H1 (cell line): ENCODE measurements at regions of chr15 and their contacts with region 1.

Region 1: DNA sequence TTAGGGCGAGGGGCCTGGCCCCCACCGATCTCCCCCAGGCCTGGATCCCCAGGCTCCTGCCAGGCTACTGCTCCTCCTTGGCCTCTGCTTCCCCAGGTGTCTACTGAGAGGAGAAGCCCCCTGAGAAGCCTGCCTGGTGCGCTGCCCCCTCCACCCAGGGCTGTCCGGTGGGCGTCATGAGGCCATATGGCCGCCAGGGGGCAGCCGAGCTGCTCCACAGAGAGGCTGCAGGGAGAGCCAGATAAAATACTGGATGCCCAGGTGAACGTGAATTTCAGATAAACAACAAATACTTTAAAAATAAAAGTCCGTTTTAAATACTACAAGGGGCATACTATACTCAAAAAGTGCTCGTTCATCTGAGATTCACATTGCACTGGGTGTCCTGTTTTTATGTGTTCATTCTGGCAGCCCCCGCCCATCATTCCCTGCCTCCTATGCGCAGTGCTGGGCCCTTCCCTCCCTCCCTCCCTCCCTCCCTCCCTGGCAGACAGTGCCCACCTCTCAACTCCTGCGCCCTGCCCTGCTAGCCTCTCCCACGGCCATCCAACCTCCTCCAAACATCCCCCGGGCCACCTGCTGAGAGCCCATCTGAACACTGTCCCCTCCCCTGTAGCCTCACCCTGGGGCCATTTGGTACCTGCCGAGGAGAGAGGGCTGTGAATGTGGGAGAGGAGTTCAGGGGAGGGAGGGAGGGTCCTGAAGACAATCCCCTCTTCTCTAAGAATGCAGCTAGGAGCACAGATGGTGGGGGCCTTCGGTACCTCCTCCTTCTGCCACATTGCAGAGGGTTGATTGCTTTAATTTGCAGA is 29.6 kb downstream of the PSTPIP1 start:
- DNase-seq: peak in 1 of 2 experiments; percentile 96
- H3K4me3 ChIP-seq: peak overlapping the region in 1 of 4 experiments; percentile 34; a peak in 1 of 8 replicates
- H3K27ac ChIP-seq: no peak overlapping the region
- H3K4me1 ChIP-seq: peaks cover 0 to 13% (median 2%) of the 10 kb centered on the region in 4 experiments; a peak in 5 of 7 replicates
- H3K27me3 ChIP-seq: peaks cover 0 to 7% (median 0%) of the 10 kb centered on the region in 4 experiments; a peak in 3 of 7 replicates
- CTCF ChIP-seq: peak in 2 of 3 experiments; percentile 85 to 87; a peak in 3 of 4 replicates
- EP300 ChIP-seq: no peak
- POLR2A ChIP-seq: no peak
- RAD21 ChIP-seq: peak; percentile 80 to 89

Region 2: GRCh38 chr15:76994971-76995945 is 29.2 kb before region 1 on chr15 and contains the start of gene PSTPIP1:
- CTCF ChIA-PET with region 1: interaction called, 18 read pairs
- POLR2A ChIA-PET with region 1: no interaction called
- DNase-seq: no peak
- H3K4me3 ChIP-seq: no peak within 1 kb of the TSS
- H3K27ac ChIP-seq: no peak within 1 kb of the TSS
- H3K4me1 ChIP-seq: no peaks in the 10 kb centered on the region; a peak in 1 of 7 replicates
- H3K27me3 ChIP-seq: no peaks in the 10 kb centered on the region; a peak in 1 of 7 replicates
- CTCF ChIP-seq: no peak
- EP300 ChIP-seq: no peak
- POLR2A ChIP-seq: no peak
- RAD21 ChIP-seq: no peak
- total RNA-seq, gene PSTPIP1: 0.63 and 1.8 TPM in 2 replicates

Region 3: GRCh38 chr15:77013776-77014131 is 10.7 kb before region 1 on chr15:
- CTCF ChIA-PET with region 1: interaction called, 16 read pairs
- POLR2A ChIA-PET with region 1: no interaction called
- DNase-seq: no peak
- H3K4me3 ChIP-seq: no peak overlapping the region
- H3K27ac ChIP-seq: no peak overlapping the region
- H3K4me1 ChIP-seq: peaks cover 0 to 4% (median 0%) of the 10 kb centered on the region in 4 experiments; a peak in 1 of 7 replicates
- H3K27me3 ChIP-seq: no peaks in the 10 kb centered on the region
- CTCF ChIP-seq: no peak
- EP300 ChIP-seq: no peak
- POLR2A ChIP-seq: no peak
- RAD21 ChIP-seq: no peak

Region 4: DNA sequence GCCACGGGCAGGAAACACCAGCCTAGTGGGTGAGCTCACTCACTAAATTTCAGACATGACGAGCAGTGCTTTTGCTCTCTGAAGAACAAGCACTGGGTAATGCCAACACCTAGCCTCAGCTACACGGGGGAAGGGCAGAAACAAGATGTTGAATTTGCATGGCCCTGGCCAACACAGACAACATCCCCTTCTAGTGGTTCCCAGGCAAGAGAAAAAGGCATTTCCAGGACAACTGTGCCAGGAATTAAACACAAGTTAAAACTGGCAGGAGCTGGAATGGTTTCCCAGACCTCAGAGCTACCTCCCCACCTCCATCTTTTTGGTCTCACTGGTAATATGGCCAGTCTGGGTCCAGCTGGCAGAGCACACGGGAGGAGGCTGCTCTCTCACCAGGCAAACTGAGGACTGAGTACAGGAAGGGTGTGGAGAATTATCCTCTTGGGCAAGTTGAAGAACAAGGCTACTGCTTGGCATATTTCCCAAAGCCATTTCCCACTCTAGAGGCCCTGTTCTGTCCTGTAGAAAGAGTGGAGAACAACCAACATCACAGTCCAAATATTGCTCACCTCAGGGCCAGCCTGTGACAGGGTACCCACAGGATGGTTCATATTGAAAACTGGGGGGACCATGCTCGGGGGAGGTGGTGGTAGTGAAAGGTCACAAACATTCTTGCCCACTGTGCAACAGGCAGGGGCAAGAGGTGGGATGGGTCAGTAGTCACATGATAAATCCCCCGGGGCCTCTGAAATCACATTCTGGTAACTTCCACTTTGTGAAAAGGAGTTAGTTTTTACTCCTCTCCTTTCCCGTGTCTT is 20.0 kb after region 1 on chr15:
- CTCF ChIA-PET with region 1: interaction called, 18 read pairs
- POLR2A ChIA-PET with region 1: no interaction called
- DNase-seq: no peak
- H3K4me3 ChIP-seq: no peak overlapping the region
- H3K27ac ChIP-seq: no peak overlapping the region
- H3K4me1 ChIP-seq: no peaks in the 10 kb centered on the region
- H3K27me3 ChIP-seq: no peaks in the 10 kb centered on the region
- CTCF ChIP-seq: no peak
- EP300 ChIP-seq: no peak
- POLR2A ChIP-seq: no peak
- RAD21 ChIP-seq: no peak

Region 5: GRCh38 chr15:77107531-77108355 is 83.3 kb after region 1 on chr15:
- CTCF ChIA-PET with region 1: interaction called, 13 read pairs
- POLR2A ChIA-PET with region 1: no interaction called
- DNase-seq: peak; percentile 38 to 72
- H3K4me3 ChIP-seq: no peak overlapping the region
- H3K27ac ChIP-seq: no peak overlapping the region
- H3K4me1 ChIP-seq: no peaks in the 10 kb centered on the region
- H3K27me3 ChIP-seq: no peaks in the 10 kb centered on the region
- CTCF ChIP-seq: peak; percentile 88 to 93 (median 91)
- EP300 ChIP-seq: no peak
- POLR2A ChIP-seq: no peak
- RAD21 ChIP-seq: peak; percentile 93 to 96

Region 6: DNA sequence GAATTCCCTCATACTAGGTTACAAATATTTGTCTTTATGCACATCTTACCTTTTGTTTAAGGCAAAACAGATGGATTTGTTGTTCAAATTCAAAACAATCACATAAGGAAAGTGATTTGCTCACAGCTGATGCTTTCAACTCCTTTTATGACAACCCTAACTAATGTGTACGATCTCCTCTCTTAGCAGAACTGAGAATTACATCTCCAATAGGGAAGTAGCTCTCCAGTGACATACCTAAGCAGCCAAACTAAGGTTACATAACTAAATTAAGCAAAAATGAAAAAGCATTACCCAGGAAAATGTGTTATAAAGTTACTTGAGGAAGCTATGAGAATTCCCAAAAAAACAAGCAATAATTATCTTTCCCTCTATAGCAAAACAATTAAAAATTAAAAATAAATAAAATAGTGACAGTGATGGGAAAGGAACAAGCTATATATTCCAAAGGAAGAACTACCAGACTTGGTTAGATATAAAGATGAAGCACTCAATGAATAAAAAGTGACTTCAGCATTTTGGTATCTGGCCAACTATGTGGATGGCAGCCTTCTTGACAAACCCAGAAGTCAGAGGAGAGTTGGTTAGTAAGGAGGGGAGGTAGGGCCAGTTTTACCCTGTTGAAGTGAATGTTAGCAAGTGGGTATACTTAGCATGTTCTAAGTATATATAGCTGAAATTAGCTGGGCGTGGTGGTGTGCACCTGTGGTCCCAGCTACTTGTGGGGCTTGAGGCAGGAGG is 363.1 kb after region 1 on chr15:
- CTCF ChIA-PET with region 1: no interaction called
- POLR2A ChIA-PET with region 1: no interaction called
- DNase-seq: no peak
- H3K4me3 ChIP-seq: no peak overlapping the region
- H3K27ac ChIP-seq: no peak overlapping the region
- H3K4me1 ChIP-seq: peaks cover 0 to 2% (median under 1%) of the 10 kb centered on the region in 4 experiments; a peak in 2 of 7 replicates
- H3K27me3 ChIP-seq: no peaks in the 10 kb centered on the region
- CTCF ChIP-seq: no peak
- EP300 ChIP-seq: no peak
- POLR2A ChIP-seq: no peak
- RAD21 ChIP-seq: no peak